ENCODE measurements at regions of chr2 and their contacts with region 1.

Region 1: GRCh38 chr2:219388127-219388844 is 574 bp upstream of the DNPEP start:
- DNase-seq: peak; percentile 97 to 100 (median 98)
- ATAC-seq: peak; percentile 87
- H3K4me3 ChIP-seq: peak overlapping the region; percentile 38
- H3K4me3 Mint-ChIP-seq: peak overlapping the region; percentile 64 to 97 (median 90)
- H3K27ac ChIP-seq: peak overlapping the region; percentile 78
- H3K27ac Mint-ChIP-seq: peak overlapping the region; percentile 73 to 98 (median 91)
- H3K4me1 ChIP-seq: peaks cover 17 to 22% of the 10 kb centered on the region in 2 donors
- H3K4me1 Mint-ChIP-seq: peaks cover 2 to 37% (median 32%) of the 10 kb centered on the region in 7 donors
- H3K27me3 ChIP-seq: no peaks in the 10 kb centered on the region
- H3K27me3 Mint-ChIP-seq: peaks cover 0 to 11% (median 0%) of the 10 kb centered on the region in 5 donors

Region 2: GRCh38 chr2:218292048-218293014 is 1096.0 kb before region 1 on chr2 and contains the start of gene TMBIM1:
- CTCF ChIA-PET with region 1: no interaction called
- POLR2A ChIA-PET with region 1: no interaction called
- intact Hi-C with region 1: loop called in 1 of 2 experiments (anchors 1 kb)
- DNase-seq: peak; percentile 72 to 90 (median 83)
- ATAC-seq: peak; percentile 96
- H3K4me3 ChIP-seq: peak within 1 kb of the TSS; percentile 53
- H3K4me3 Mint-ChIP-seq: peak within 1 kb of the TSS; percentile 82 to 96 (median 92)
- H3K27ac ChIP-seq: peak within 1 kb of the TSS; percentile 93
- H3K27ac Mint-ChIP-seq: peak within 1 kb of the TSS; percentile 88 to 99 (median 98)
- H3K4me1 ChIP-seq: peaks cover 42 to 47% of the 10 kb centered on the region in 2 donors
- H3K4me1 Mint-ChIP-seq: peaks cover 32 to 61% (median 53%) of the 10 kb centered on the region in 7 donors
- H3K27me3 ChIP-seq: no peaks in the 10 kb centered on the region
- H3K27me3 Mint-ChIP-seq: peaks cover 0 to 2% (median 0%) of the 10 kb centered on the region in 5 donors
- total RNA-seq, gene TMBIM1: 51.7 to 112 (median 83.8) TPM

Region 3: GRCh38 chr2:218671654-218672566 is 716.4 kb before region 1 on chr2 and contains the starts of genes RNF25 and STK36:
- CTCF ChIA-PET with region 1: no interaction called
- POLR2A ChIA-PET with region 1: interaction called, 4 read pairs
- intact Hi-C with region 1: loop called (anchors 5 kb)
- DNase-seq: peak; percentile 60 to 86 (median 79)
- ATAC-seq: peak; percentile 96
- H3K4me3 ChIP-seq: peak within 1 kb of the TSS; percentile 81
- H3K4me3 Mint-ChIP-seq: peak within 1 kb of the TSS; percentile 88 to 100 (median 98)
- H3K27ac ChIP-seq: peak within 1 kb of the TSS; percentile 84
- H3K27ac Mint-ChIP-seq: peak within 1 kb of the TSS; percentile 90 to 98 (median 96)
- H3K4me1 ChIP-seq: peaks cover 9 to 15% of the 10 kb centered on the region in 2 donors
- H3K4me1 Mint-ChIP-seq: peaks cover 14 to 29% (median 24%) of the 10 kb centered on the region in 7 donors
- H3K27me3 ChIP-seq: no peaks in the 10 kb centered on the region
- H3K27me3 Mint-ChIP-seq: no peaks in the 10 kb centered on the region
- total RNA-seq, gene RNF25: 12.6 to 33.4 (median 28.3) TPM
- total RNA-seq, gene STK36: 18.9 to 28.1 (median 19.7) TPM

Region 4: DNA sequence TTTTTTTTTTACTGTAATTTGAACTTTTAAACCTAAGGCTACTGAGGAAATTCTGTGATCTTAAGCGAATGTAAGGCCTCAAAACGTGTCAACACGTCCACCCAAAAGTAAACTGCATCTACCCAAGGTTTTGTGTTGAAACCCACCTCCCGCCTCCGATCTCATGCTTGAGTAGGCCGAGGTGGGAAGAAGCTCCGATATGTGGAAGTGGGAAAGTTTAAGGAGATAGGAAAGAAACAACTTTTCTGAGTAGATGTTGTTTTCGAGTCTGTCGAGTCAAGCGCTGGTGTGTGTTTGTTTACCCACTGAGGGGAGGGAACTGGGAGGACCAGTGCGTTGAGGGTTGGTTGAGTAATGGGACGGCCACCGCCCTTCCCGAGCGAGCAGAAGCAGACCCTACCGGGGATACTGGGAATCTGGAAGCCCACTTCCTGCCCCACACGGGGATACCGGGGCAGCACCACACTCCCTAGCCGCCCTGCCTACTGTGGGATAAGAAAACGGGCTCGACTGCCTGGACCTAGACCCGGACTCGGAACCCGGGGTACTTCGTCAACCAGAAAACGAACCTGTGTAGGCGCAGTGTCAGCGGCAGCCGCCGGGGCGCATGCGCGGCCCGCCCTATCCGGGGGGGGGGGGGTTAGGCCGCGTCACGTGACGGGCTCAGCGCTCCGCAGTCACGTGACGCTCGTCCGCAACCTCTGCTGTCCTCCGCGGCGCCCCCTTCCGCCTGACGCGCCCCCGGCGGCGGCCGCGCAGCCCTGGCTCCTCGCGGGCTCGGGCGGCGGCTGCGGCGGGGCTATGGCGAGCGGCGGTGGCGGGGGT is 210.5 kb before region 1 on chr2 and contains the start of gene RETREG2:
- CTCF ChIA-PET with region 1: no interaction called
- POLR2A ChIA-PET with region 1: interaction called, 14 read pairs
- intact Hi-C with region 1: loop called (anchors 1 kb)
- DNase-seq: peak; percentile 79 to 86 (median 83)
- ATAC-seq: peak; percentile 73
- H3K4me3 ChIP-seq: peak within 1 kb of the TSS; percentile 97
- H3K4me3 Mint-ChIP-seq: peak within 1 kb of the TSS; percentile 90 to 99 (median 96)
- H3K27ac ChIP-seq: peak within 1 kb of the TSS; percentile 96
- H3K27ac Mint-ChIP-seq: peak within 1 kb of the TSS; percentile 97 to 100 (median 99)
- H3K4me1 ChIP-seq: peaks cover 44 to 47% of the 10 kb centered on the region in 2 donors
- H3K4me1 Mint-ChIP-seq: peaks cover 48 to 80% (median 69%) of the 10 kb centered on the region in 7 donors
- H3K27me3 ChIP-seq: no peaks in the 10 kb centered on the region
- H3K27me3 Mint-ChIP-seq: no peaks in the 10 kb centered on the region
- total RNA-seq, gene RETREG2: 70.2 to 124 (median 90.9) TPM

Region 5: GRCh38 chr2:219278655-219279516 is 109.4 kb before region 1 on chr2 and contains the start of gene DNAJB2:
- CTCF ChIA-PET with region 1: interaction called, 5 read pairs
- POLR2A ChIA-PET with region 1: interaction called, 13 read pairs
- intact Hi-C with region 1: loop called (anchors 1 kb)
- DNase-seq: peak; percentile 94 to 100 (median 98)
- ATAC-seq: peak; percentile 91
- H3K4me3 ChIP-seq: peak within 1 kb of the TSS; percentile 73
- H3K4me3 Mint-ChIP-seq: peak within 1 kb of the TSS; percentile 85 to 99 (median 97)
- H3K27ac ChIP-seq: peak within 1 kb of the TSS; percentile 98
- H3K27ac Mint-ChIP-seq: peak within 1 kb of the TSS; percentile 97 to 100 (median 99)
- H3K4me1 ChIP-seq: peaks cover 22 to 33% of the 10 kb centered on the region in 2 donors
- H3K4me1 Mint-ChIP-seq: peaks cover 32 to 58% (median 53%) of the 10 kb centered on the region in 7 donors
- H3K27me3 ChIP-seq: no peaks in the 10 kb centered on the region
- H3K27me3 Mint-ChIP-seq: peaks cover 0 to 3% (median 0%) of the 10 kb centered on the region in 5 donors
- total RNA-seq, gene DNAJB2: 50.8 to 134 (median 113) TPM

Region 6: GRCh38 chr2:219331560-219332213 is 56.6 kb before region 1 on chr2:
- CTCF ChIA-PET with region 1: no interaction called
- POLR2A ChIA-PET with region 1: no interaction called
- intact Hi-C with region 1: no loop called
- DNase-seq: peak in 6 of 9 donors; percentile 6 to 58 (median 21)
- ATAC-seq: no peak
- H3K4me3 ChIP-seq: no peak overlapping the region
- H3K4me3 Mint-ChIP-seq: peak overlapping the region in 2 of 10 donors; percentile 66 to 67
- H3K27ac ChIP-seq: no peak overlapping the region
- H3K27ac Mint-ChIP-seq: no peak overlapping the region
- H3K4me1 ChIP-seq: no peaks in the 10 kb centered on the region
- H3K4me1 Mint-ChIP-seq: peaks cover 0 to 9% (median 5%) of the 10 kb centered on the region in 7 donors
- H3K27me3 ChIP-seq: peaks cover 0 to 10% of the 10 kb centered on the region in 2 donors
- H3K27me3 Mint-ChIP-seq: peaks cover 59 to 84% (median 71%) of the 10 kb centered on the region in 5 donors

Region 7: GRCh38 chr2:219498280-219499057 is 110.2 kb after region 1 on chr2 and contains the start of gene GMPPA:
- CTCF ChIA-PET with region 1: no interaction called
- POLR2A ChIA-PET with region 1: interaction called, 5 read pairs
- intact Hi-C with region 1: loop called (anchors 1 kb)
- DNase-seq: peak; percentile 78 to 95 (median 90)
- ATAC-seq: peak; percentile 94
- H3K4me3 ChIP-seq: peak within 1 kb of the TSS; percentile 85
- H3K4me3 Mint-ChIP-seq: peak within 1 kb of the TSS; percentile 91 to 99 (median 96)
- H3K27ac ChIP-seq: peak within 1 kb of the TSS; percentile 79
- H3K27ac Mint-ChIP-seq: peak within 1 kb of the TSS; percentile 76 to 97 (median 86)
- H3K4me1 ChIP-seq: peaks cover 19 to 22% of the 10 kb centered on the region in 2 donors
- H3K4me1 Mint-ChIP-seq: peaks cover 26 to 42% (median 36%) of the 10 kb centered on the region in 7 donors
- H3K27me3 ChIP-seq: peaks cover 4 to 9% of the 10 kb centered on the region in 2 donors
- H3K27me3 Mint-ChIP-seq: peaks cover 28 to 47% (median 40%) of the 10 kb centered on the region in 5 donors
- total RNA-seq, gene GMPPA: 22.4 to 58.3 (median 37.2) TPM

Region 8: GRCh38 chr2:219803294-219803693 is 415.0 kb after region 1 on chr2:
- CTCF ChIA-PET with region 1: no interaction called
- POLR2A ChIA-PET with region 1: no interaction called
- intact Hi-C with region 1: no loop called
- DNase-seq: no peak
- ATAC-seq: no peak
- H3K4me3 ChIP-seq: no peak overlapping the region
- H3K4me3 Mint-ChIP-seq: no peak overlapping the region
- H3K27ac ChIP-seq: no peak overlapping the region
- H3K27ac Mint-ChIP-seq: no peak overlapping the region
- H3K4me1 ChIP-seq: no peaks in the 10 kb centered on the region
- H3K4me1 Mint-ChIP-seq: no peaks in the 10 kb centered on the region
- H3K27me3 ChIP-seq: no peaks in the 10 kb centered on the region
- H3K27me3 Mint-ChIP-seq: peaks cover 0 to 15% (median 9%) of the 10 kb centered on the region in 5 donors